Naive thymus-derived CD4-positive, alpha-beta T cell (primary cell): ENCODE measurements at regions of chr5 and their contacts with region 1.

Region 1: DNA sequence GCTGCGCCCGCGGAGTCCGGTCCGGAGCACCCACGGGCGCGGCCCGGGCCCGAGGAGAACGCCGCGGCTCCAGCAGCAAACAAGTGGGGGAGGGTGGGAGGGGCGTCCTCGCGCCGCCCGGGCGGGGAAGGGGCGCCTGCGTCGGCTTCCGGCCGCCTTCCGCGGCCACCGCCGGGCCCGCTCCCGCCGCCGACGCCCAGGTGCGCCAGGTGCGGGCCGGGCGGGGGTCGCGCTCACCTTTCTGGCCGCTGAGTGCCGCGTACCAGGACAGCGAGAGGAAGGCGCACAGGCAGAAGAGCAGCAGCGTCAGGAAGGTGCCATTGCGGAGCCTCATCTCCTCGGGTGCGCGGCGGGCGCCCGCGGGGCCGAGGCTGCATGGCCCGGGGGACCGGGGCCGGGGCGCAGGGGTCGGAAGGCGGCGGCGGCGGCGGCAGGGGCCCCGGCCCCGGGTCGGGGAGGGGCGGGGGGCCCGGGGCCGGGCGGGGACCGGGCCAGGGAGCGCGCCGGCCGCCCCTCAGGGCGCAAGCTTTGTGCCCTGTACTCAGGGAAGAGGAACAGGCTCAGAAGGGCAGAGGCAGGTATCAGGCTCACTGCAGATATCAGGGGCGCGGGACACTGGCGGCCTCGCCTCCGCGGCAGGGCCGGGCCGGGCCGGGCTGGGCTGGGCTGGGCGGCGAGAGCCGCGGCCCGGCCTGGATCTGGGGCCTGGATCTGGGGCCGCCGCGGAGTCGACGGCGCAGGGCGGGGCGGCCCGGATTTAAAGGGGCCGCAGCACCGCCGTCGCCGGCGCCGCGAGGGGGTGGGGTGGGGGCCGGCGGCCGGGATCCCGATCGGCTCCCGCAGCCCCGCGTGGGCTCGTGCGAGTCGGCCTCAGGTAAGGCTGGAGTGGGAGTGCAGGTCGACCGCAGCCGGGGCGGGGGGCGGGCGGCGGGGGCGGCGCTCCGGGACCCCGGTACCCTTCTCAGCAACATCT is at the start of gene MGAT4B:
- DNase-seq: peak in 8 of 9 donors; percentile 28 to 81 (median 57)
- ATAC-seq: peak; percentile 84
- H3K4me3 ChIP-seq: peak within 1 kb of the TSS; percentile 41
- H3K4me3 Mint-ChIP-seq: peak within 1 kb of the TSS; percentile 46 to 87 (median 80)
- H3K27ac ChIP-seq: peak within 1 kb of the TSS; percentile 73
- H3K27ac Mint-ChIP-seq: peak within 1 kb of the TSS in 5 of 9 donors; percentile 22 to 85 (median 70)
- H3K4me1 ChIP-seq: peaks cover 19 to 26% of the 10 kb centered on the region in 2 donors
- H3K4me1 Mint-ChIP-seq: peaks cover 24 to 41% (median 33%) of the 10 kb centered on the region in 7 donors
- H3K27me3 ChIP-seq: no peaks in the 10 kb centered on the region
- H3K27me3 Mint-ChIP-seq: no peaks in the 10 kb centered on the region
- total RNA-seq, gene MGAT4B: 98.3 to 143 (median 118) TPM

Region 2: DNA sequence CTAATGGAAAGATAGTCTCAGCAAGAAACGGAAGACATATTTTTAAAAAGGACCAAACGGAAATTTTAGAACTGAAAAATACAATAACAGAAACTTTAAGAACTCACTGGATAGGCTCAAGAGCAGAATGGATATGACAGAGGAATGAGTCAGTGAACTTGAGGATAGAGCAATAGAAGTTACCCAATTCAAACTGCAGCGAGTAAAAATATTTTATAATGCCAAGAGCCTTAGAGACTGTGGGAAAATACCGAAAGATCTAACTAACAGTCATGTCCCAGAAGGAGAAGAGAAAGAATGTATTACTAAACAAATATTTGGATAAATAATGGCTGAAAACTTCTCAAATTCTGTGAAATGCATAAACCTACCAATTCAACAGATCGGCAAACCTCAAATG is 502.1 kb before region 1 on chr5:
- CTCF ChIA-PET with region 1: no interaction called
- POLR2A ChIA-PET with region 1: no interaction called
- intact Hi-C with region 1: no loop called
- DNase-seq: no peak
- ATAC-seq: no peak
- H3K4me3 ChIP-seq: no peak overlapping the region
- H3K4me3 Mint-ChIP-seq: no peak overlapping the region
- H3K27ac ChIP-seq: no peak overlapping the region
- H3K27ac Mint-ChIP-seq: no peak overlapping the region
- H3K4me1 ChIP-seq: no peaks in the 10 kb centered on the region
- H3K4me1 Mint-ChIP-seq: peaks cover 0 to 3% (median 0%) of the 10 kb centered on the region in 7 donors
- H3K27me3 ChIP-seq: no peaks in the 10 kb centered on the region
- H3K27me3 Mint-ChIP-seq: peaks cover 0 to 18% (median 0%) of the 10 kb centered on the region in 5 donors

Region 3: DNA sequence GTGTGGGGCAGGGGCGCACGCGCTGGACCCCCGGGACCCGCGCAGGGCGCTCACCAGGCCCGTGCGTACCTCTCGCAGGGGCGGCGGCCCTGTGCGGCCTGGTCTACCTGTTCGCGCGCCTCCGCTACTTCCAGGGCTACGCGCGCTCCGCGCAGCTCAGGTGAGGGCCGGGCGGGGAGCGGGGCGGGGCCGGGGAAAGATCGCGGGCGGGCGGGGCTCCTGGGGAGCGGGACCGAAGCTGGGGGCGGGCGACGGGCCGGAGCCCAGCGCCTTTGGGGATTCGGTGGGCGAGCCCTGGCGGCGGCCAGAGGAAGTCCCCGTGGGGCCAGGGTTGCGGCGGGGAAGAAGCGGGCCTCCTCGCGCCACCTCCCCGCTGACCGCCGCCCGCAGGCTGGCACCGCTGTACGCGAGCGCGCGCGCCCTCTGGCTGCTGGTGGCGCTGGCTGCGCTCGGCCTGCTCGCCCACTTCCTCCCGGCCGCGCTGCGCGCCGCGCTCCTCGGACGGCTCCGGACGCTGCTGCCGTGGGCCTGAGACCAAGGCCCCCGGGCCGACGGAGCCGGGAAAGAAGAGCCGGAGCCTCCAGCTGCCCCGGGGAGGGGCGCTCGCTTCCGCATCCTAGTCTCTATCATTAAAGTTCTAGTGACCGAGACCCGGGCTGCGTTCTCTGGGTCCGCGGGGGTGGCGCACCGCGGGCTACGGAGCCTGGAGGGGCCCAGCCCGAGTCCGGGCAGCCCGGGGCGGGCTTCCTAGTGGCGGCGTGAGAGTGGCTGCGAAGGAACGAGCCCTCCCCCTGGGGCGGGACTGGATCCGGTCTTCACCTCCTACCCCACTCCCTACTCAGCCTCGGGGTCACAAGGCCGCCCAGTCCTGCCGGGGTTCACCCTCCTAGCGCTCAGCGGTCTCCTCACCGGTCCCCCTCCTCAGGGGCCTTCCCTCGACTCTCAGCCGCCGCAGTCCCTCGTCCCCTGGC is 10.4 kb before region 1 on chr5:
- CTCF ChIA-PET with region 1: no interaction called
- POLR2A ChIA-PET with region 1: interaction called, 7 read pairs
- intact Hi-C with region 1: loop called (anchors 1 kb)
- DNase-seq: peak; percentile 37 to 81 (median 65)
- ATAC-seq: peak; percentile 84
- H3K4me3 ChIP-seq: peak overlapping the region; percentile 48
- H3K4me3 Mint-ChIP-seq: peak overlapping the region; percentile 40 to 78 (median 64)
- H3K27ac ChIP-seq: peak overlapping the region; percentile 68
- H3K27ac Mint-ChIP-seq: peak overlapping the region in 4 of 9 donors; percentile 17 to 80 (median 33)
- H3K4me1 ChIP-seq: peaks cover 24 to 28% of the 10 kb centered on the region in 2 donors
- H3K4me1 Mint-ChIP-seq: peaks cover 20 to 33% (median 30%) of the 10 kb centered on the region in 7 donors
- H3K27me3 ChIP-seq: no peaks in the 10 kb centered on the region
- H3K27me3 Mint-ChIP-seq: no peaks in the 10 kb centered on the region

Region 4: DNA sequence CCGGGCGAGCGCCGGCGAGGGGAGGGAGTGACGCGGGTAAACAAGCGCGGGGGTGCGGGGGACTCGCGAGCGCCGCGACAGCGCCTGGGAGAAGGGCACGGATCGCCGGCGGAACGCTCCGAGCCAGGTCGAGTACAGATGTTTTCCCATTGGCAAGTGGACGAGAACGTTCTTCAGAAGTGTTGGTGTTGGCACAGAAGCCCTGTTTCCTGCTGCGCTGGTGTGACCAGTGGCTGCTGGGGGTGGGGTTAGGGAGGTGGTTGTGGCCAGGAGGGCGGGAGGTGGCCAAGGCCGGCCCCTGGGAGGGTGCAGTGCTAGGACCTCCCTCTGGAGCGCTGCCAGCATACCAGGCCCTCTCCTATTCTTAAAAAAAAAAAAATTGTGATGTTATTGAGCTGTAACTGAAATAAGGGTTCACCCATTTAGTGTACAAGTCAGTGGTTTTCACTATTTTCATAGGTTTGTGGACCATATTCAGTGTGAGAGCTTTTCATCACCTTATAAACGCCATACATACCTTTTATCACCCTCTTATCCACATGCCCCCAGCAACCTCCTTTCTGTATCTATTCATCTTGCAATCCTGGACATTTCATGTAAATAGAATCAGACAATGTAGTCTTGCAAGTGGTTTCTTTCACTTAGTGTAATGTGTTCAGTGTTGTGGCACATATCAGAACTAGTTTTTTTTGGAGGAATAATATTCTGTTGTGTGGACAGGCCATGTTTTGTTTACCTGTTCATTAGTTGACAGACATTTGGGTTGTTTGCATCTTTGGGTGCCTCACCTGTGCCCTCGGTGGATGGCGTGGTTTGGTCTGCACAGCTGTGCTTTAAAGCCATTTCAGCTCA is 15.3 kb after region 1 on chr5:
- CTCF ChIA-PET with region 1: interaction called, 8 read pairs
- POLR2A ChIA-PET with region 1: interaction called, 136 read pairs
- intact Hi-C with region 1: loop called (anchors 1 kb)
- DNase-seq: peak; percentile 72 to 88 (median 85)
- ATAC-seq: peak; percentile 73
- H3K4me3 ChIP-seq: peak overlapping the region; percentile 87
- H3K4me3 Mint-ChIP-seq: peak overlapping the region; percentile 88 to 98 (median 95)
- H3K27ac ChIP-seq: peak overlapping the region; percentile 96
- H3K27ac Mint-ChIP-seq: peak overlapping the region; percentile 79 to 97 (median 94)
- H3K4me1 ChIP-seq: peaks cover 31 to 36% of the 10 kb centered on the region in 2 donors
- H3K4me1 Mint-ChIP-seq: peaks cover 30 to 62% (median 45%) of the 10 kb centered on the region in 7 donors
- H3K27me3 ChIP-seq: no peaks in the 10 kb centered on the region
- H3K27me3 Mint-ChIP-seq: no peaks in the 10 kb centered on the region

Region 5: DNA sequence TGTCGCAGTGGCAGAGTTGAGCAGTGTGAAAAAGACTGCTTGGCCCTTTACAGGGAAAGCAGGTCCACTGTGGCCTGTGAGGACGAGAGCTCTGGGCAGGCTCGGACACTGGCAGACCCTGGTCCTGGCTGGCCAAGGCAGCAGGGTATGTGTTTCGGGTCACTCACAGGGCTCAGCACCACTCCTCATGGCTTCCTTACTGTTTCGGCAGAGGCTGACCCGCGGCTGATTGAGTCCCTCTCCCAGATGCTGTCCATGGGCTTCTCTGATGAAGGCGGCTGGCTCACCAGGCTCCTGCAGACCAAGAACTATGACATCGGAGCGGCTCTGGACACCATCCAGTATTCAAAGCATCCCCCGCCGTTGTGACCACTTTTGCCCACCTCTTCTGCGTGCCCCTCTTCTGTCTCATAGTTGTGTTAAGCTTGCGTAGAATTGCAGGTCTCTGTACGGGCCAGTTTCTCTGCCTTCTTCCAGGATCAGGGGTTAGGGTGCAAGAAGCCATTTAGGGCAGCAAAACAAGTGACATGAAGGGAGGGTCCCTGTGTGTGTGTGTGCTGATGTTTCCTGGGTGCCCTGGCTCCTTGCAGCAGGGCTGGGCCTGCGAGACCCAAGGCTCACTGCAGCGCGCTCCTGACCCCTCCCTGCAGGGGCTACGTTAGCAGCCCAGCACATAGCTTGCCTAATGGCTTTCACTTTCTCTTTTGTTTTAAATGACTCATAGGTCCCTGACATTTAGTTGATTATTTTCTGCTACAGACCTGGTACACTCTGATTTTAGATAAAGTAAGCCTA is 29.9 kb after region 1 on chr5:
- CTCF ChIA-PET with region 1: interaction called, 5 read pairs
- POLR2A ChIA-PET with region 1: interaction called, 5 read pairs
- intact Hi-C with region 1: loop called (anchors 1 to 2 kb)
- DNase-seq: peak in 7 of 9 donors; percentile 23 to 67 (median 47)
- ATAC-seq: peak; percentile 87
- H3K4me3 ChIP-seq: no peak overlapping the region
- H3K4me3 Mint-ChIP-seq: peak overlapping the region in 9 of 10 donors; percentile 1 to 78 (median 45)
- H3K27ac ChIP-seq: peak overlapping the region; percentile 69
- H3K27ac Mint-ChIP-seq: peak overlapping the region; percentile 77 to 93 (median 88)
- H3K4me1 ChIP-seq: peaks cover 8 to 19% of the 10 kb centered on the region in 2 donors
- H3K4me1 Mint-ChIP-seq: peaks cover 12 to 26% (median 15%) of the 10 kb centered on the region in 7 donors
- H3K27me3 ChIP-seq: no peaks in the 10 kb centered on the region
- H3K27me3 Mint-ChIP-seq: no peaks in the 10 kb centered on the region

Region 6: GRCh38 chr5:180071531-180072255 is 265.2 kb after region 1 on chr5 and contains the start of gene RNF130:
- CTCF ChIA-PET with region 1: no interaction called
- POLR2A ChIA-PET with region 1: no interaction called
- intact Hi-C with region 1: loop called (anchors 5 kb)
- DNase-seq: peak; percentile 64 to 91 (median 77)
- ATAC-seq: peak; percentile 88
- H3K4me3 ChIP-seq: peak within 1 kb of the TSS; percentile 62
- H3K4me3 Mint-ChIP-seq: peak within 1 kb of the TSS; percentile 80 to 93 (median 91)
- H3K27ac ChIP-seq: peak within 1 kb of the TSS; percentile 76
- H3K27ac Mint-ChIP-seq: peak within 1 kb of the TSS in 8 of 9 donors; percentile 78 to 95 (median 90)
- H3K4me1 ChIP-seq: peaks cover 6 to 21% of the 10 kb centered on the region in 2 donors
- H3K4me1 Mint-ChIP-seq: peaks cover 10 to 47% (median 38%) of the 10 kb centered on the region in 7 donors
- H3K27me3 ChIP-seq: no peaks in the 10 kb centered on the region
- H3K27me3 Mint-ChIP-seq: peaks cover 0 to 50% (median 0%) of the 10 kb centered on the region in 5 donors
- total RNA-seq, gene RNF130: 3.6 to 76.3 (median 23.3) TPM